ENCODE measurements at regions of chr13 and their contacts with region 1.

Region 1: GRCh38 chr13:26498656-26499591 is 58.6 kb upstream of the WASF3 start:
- DNase-seq: no peak
- ATAC-seq: no peak

Region 2: GRCh38 chr13:25943658-25944057 is 555.3 kb before region 1 on chr13:
- intact Hi-C with region 1: no loop called
- DNase-seq: no peak
- ATAC-seq: no peak

Region 3: DNA sequence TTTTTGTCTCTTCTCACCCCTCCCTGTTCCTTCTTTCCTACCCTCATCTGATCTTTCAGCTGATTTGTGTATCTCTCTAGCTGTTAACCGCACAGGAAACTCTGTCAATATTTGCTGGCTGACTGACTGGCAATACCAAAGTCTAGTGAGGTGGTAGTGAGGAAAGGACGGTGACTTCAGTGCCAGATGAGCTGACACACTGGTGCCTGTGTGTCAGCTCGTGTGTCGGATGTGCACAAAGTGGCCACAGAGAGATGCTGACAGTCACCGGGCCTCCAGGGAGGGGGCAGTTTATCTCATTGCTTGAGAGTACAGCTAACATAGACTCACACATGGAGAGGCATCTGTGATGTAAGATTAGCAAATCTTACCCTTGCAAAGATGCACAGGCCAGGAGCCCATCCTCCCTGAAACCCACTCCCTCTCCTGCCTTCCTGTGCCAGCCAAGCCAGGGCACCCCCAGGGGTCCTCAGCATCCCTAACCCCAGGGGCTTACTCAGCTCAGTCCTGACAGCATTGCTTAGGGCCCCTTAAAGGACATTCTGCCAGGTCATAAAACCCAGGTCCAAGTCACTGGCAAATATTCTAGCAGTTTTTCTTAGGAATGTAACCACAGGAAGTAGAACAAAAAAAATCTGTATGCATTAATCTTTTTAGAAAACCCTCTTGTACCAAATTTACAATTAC is 527.3 kb before region 1 on chr13:
- intact Hi-C with region 1: no loop called
- DNase-seq: no peak
- ATAC-seq: no peak

Region 4: DNA sequence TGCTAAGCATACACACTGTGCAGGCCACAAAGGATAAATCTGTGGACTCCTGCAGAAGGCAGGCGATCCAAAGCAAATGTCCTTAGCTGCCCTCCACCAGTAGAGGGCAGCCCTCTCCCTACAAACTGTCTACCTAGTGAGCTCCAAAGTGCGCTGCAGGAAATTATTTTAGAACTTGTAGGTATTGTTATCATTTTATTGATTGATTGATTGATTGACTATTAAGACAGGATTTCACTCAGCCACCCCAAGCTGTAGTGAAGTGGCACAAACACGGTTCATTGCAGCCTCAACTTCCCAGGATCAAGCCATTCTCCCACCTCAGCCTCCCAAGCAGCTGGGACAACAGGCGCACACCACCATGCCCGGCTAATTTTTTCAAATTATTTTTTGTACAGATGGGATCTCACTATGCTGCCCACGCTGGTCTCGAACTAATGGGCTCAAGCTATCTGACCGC is 314.1 kb before region 1 on chr13:
- intact Hi-C with region 1: loop called in 1 of 2 experiments (anchors 5 kb)
- DNase-seq: peak; percentile 60 to 63
- ATAC-seq: peak; percentile 43

Region 5: DNA sequence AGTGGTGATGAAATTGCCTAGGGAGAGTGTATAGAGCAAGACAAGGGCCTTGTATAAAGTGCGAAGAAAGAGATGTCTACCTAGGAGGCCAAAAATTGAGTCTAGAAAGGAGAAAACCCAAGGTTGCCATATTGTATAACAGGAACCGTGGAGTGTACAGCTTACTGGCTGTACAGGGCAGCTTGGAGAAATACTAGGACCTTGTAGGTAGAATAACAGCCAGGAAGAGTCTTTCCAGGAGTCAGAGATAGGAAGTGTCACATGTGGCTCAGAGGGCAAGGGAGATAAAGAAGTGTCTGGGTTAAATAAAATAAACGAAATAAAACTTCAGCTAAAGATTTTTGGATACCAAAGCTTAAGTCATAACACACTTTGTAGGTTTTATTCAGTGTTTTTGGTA is 232.6 kb before region 1 on chr13:
- intact Hi-C with region 1: loop called in 1 of 2 experiments (anchors 10 kb)
- DNase-seq: no peak
- ATAC-seq: no peak

Measured in left colon (tissue), 2 donors.